ENCODE measurements at regions of chr11 and their contacts with region 1.

Region 1: DNA sequence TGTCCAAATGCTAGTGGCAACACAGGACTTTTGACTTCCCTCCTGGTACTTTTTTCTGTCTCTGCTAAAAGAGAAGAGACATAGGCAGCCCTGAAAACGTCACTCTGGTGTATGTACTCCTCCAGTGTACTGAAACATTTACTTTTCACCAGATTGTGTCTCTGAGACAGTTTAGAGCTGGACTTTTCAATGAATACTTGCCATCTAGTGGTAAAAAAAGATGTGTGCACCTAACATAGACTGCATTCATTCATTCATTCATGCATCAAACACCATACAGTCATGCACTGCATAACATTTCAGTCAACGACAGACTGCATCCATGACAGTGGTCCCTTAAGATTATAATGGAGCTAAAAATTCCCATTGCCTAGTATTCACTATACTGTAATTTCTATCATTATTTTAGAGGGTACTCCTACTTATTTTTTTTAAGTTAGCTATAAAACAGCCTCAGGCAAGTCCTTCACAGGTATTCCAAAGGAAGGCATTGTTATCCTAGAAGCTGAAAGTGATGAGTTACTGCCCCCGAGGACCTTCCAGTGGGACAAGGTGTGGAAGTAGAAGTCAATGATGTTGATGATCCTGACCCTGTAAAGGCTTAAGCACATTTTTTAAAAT is 186.2 kb downstream of the SPON1 start:
- DNase-seq: no peak
- H3K4me3 ChIP-seq: no peak overlapping the region
- H3K27ac ChIP-seq: no peak overlapping the region
- H3K4me1 ChIP-seq: no peaks in the 10 kb centered on the region
- H3K27me3 ChIP-seq: no peaks in the 10 kb centered on the region
- CTCF ChIP-seq: peak; percentile 43 to 64 (median 46)

Region 2: DNA sequence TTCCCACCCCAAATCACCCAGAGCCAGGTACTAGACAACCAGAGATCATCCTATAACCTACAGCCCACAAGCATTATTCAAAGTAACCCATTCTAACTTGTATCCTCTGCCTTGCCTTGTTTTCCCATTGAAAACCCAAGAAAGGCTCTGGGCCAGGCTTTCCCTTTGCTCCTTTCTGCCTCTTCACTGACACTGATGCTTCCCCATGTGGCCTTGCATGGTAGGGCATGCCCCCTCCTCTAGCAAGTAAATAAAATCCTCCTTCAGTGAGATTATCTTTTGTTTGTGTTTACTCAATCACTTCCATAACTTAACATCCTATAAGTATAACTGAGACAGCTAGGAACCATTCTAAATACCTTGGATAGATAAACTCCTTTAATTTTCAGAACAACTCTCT is 545.9 kb before region 1 on chr11:
- intact Hi-C with region 1: no loop called
- DNase-seq: no peak
- H3K4me3 ChIP-seq: no peak overlapping the region
- H3K27ac ChIP-seq: no peak overlapping the region
- H3K4me1 ChIP-seq: no peaks in the 10 kb centered on the region
- H3K27me3 ChIP-seq: no peaks in the 10 kb centered on the region
- CTCF ChIP-seq: no peak

Region 3: GRCh38 chr11:13955971-13956421 is 192.8 kb before region 1 on chr11:
- intact Hi-C with region 1: loop called (anchors 1 kb)
- DNase-seq: peak in 1 of 2 donors; percentile 74
- H3K4me3 ChIP-seq: no peak overlapping the region
- H3K27ac ChIP-seq: no peak overlapping the region
- H3K4me1 ChIP-seq: no peaks in the 10 kb centered on the region
- H3K27me3 ChIP-seq: peaks cover 7% of the 10 kb centered on the region
- CTCF ChIP-seq: peak; percentile 79 to 91 (median 79)

Region 4: GRCh38 chr11:14249121-14249963 is 100.6 kb after region 1 on chr11:
- intact Hi-C with region 1: loop called (anchors 5 kb)
- DNase-seq: peak in 1 of 2 donors; percentile 73
- H3K4me3 ChIP-seq: no peak overlapping the region
- H3K27ac ChIP-seq: no peak overlapping the region
- H3K4me1 ChIP-seq: no peaks in the 10 kb centered on the region
- H3K27me3 ChIP-seq: no peaks in the 10 kb centered on the region
- CTCF ChIP-seq: peak; percentile 71 to 92 (median 82)